Activated CD4-positive, alpha-beta memory T cell treated with anti-CD3 and anti-CD28 coated beads, Interleukin-2, amount 10 ng/mL, durations not matched to agents 7 days and 5 days (primary cell): ENCODE measurements at regions of chr22 and their contacts with region 1.

Region 1: GRCh38 chr22:41621099-41621910 is at the start of gene XRCC6:
- DNase-seq: peak; percentile 100
- H3K4me3 Mint-ChIP-seq: peak within 1 kb of the TSS; percentile 99
- H3K27ac Mint-ChIP-seq: peak within 1 kb of the TSS; percentile 97
- H3K4me1 Mint-ChIP-seq: peaks cover 46% of the 10 kb centered on the region
- H3K27me3 Mint-ChIP-seq: no peaks in the 10 kb centered on the region
- total RNA-seq, gene XRCC6: 244 to 251 TPM

Region 2: DNA sequence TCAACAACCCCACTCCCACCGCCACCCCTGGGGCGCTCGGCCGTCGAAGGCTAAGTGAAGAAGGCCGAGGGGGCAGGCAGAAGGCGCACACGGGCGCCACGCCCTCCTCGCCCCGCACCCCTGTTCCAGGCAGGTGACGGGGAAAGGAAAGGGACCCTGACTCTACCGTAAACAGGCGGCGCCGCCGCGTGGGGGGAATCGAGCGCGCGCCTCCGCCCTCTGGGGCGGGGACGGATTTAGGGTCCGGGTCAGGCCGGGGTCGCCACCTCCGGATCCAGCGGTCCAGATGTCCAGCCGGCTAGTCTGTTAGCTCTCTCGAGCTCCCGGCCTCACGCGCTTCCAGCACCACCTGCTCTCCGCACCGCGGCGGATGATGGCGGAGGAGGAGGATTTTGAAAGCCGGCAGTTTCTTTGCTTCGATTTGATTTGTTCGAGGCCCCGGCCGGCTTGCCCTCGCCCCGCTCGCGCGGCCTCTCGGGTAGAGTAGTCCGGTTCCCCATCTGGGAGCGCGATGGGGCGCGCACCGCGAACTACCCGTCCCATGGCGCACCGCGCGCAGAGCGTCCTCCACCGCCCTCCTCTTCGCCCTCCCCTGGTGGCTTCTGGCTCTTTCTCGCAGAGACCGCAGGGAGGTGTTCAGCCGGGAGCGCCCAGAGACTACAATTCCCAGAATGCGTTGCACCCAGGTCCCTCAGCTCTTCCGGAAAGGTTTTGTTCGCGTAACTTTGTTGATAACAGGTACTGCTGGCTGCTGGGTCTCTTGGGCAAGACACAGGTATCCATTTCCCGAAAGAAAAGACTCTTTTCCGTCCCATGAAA is 335.3 kb before region 1 on chr22 and contains the start of gene RANGAP1:
- CTCF ChIA-PET with region 1: no interaction called
- POLR2A ChIA-PET with region 1: interaction called, 15 read pairs
- DNase-seq: peak; percentile 99
- H3K4me3 Mint-ChIP-seq: peak within 1 kb of the TSS; percentile 94
- H3K27ac Mint-ChIP-seq: peak within 1 kb of the TSS; percentile 99
- H3K4me1 Mint-ChIP-seq: peaks cover 41% of the 10 kb centered on the region
- H3K27me3 Mint-ChIP-seq: no peaks in the 10 kb centered on the region
- total RNA-seq, gene RANGAP1: 98.7 to 99.7 TPM

Region 3: GRCh38 chr22:41341990-41342389 is 279.3 kb before region 1 on chr22:
- CTCF ChIA-PET with region 1: no interaction called
- POLR2A ChIA-PET with region 1: no interaction called
- DNase-seq: peak; percentile 22
- H3K4me3 Mint-ChIP-seq: no peak overlapping the region
- H3K27ac Mint-ChIP-seq: peak overlapping the region; percentile 31
- H3K4me1 Mint-ChIP-seq: peaks cover 7% of the 10 kb centered on the region
- H3K27me3 Mint-ChIP-seq: no peaks in the 10 kb centered on the region

Region 4: DNA sequence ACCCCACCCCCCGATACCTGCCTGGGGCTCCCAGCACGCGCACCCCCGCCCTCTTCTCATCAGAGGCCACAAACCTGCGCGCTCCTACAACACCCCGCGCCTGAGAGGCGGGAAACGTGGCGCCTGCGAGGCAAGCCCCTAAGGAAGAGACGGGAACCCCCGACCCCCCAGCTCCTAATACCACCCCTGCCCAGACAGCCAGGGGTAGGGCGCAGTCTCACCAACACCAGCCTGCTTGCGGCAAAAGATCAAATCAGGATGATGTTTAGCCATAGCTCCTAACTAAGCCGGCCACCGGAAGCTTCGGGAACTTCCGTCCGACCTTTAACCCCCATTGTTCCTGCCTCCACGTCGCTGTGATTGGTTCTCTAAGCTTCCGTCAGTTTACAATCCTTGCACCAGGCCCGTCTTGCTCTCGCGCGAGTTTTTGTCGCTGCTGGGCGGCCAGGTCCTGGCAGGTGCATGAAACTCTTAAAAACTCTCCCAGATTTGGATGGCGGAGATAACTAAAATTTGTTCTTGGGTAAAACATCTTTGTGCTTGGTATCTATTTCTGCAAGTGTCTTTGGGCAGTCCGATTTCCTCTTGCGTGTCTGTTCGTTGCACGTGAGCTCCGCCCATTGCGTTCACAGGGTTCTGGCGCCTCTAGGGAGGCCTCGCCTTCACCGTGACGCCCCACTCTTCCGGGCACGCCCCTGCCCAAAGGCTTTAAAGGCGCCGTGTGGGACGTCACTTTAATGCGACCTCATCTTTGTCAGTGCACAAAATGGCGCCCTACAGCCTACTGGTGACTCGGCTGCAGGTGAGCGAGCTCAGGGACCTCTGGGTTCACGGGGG is 152.7 kb before region 1 on chr22 and contains the starts of genes ACO2 and PHF5A:
- CTCF ChIA-PET with region 1: interaction called, 5 read pairs
- POLR2A ChIA-PET with region 1: interaction called, 13 read pairs
- DNase-seq: peak; percentile 98
- H3K4me3 Mint-ChIP-seq: peak within 1 kb of the TSS; percentile 77
- H3K27ac Mint-ChIP-seq: peak within 1 kb of the TSS; percentile 96
- H3K4me1 Mint-ChIP-seq: peaks cover 58% of the 10 kb centered on the region
- H3K27me3 Mint-ChIP-seq: no peaks in the 10 kb centered on the region
- total RNA-seq, gene ACO2: 69.9 to 72.2 TPM
- total RNA-seq, gene PHF5A: 43.9 to 55.3 TPM

Region 5: GRCh38 chr22:41589391-41590241 is 31.7 kb before region 1 on chr22 and contains the start of gene PMM1:
- CTCF ChIA-PET with region 1: interaction called, 12 read pairs
- POLR2A ChIA-PET with region 1: interaction called, 158 read pairs
- DNase-seq: peak; percentile 100
- H3K4me3 Mint-ChIP-seq: peak within 1 kb of the TSS; percentile 96
- H3K27ac Mint-ChIP-seq: peak within 1 kb of the TSS; percentile 87
- H3K4me1 Mint-ChIP-seq: peaks cover 26% of the 10 kb centered on the region
- H3K27me3 Mint-ChIP-seq: no peaks in the 10 kb centered on the region
- total RNA-seq, gene PMM1: 44.4 to 46.2 TPM

Region 6: DNA sequence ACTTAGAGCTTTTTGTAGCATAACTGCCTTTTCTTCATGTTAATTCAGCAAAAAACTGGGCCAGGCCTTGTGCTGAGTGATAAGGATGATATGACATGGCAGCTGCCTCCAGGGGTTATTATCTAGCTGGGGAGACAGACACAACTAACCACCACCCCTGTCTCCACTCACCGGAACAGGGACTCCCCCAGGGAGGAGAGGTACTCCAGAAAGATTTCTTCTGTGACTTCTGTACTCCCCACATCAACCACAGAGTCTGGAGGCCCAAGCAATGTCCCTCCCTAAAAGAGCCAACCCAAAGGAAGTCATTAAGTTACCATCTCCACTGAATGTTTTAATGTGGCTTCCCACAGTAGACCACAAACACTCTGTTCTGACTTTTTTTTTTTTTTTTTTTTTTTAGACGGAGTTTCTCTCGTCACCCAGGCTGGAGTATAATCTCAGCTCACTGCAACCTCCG is 17.4 kb before region 1 on chr22:
- CTCF ChIA-PET with region 1: interaction called, 7 read pairs
- POLR2A ChIA-PET with region 1: interaction called, 82 read pairs
- DNase-seq: peak; percentile 77
- H3K4me3 Mint-ChIP-seq: peak overlapping the region; percentile 50
- H3K27ac Mint-ChIP-seq: peak overlapping the region; percentile 72
- H3K4me1 Mint-ChIP-seq: peaks cover 38% of the 10 kb centered on the region
- H3K27me3 Mint-ChIP-seq: peaks cover 4% of the 10 kb centered on the region

Region 7: DNA sequence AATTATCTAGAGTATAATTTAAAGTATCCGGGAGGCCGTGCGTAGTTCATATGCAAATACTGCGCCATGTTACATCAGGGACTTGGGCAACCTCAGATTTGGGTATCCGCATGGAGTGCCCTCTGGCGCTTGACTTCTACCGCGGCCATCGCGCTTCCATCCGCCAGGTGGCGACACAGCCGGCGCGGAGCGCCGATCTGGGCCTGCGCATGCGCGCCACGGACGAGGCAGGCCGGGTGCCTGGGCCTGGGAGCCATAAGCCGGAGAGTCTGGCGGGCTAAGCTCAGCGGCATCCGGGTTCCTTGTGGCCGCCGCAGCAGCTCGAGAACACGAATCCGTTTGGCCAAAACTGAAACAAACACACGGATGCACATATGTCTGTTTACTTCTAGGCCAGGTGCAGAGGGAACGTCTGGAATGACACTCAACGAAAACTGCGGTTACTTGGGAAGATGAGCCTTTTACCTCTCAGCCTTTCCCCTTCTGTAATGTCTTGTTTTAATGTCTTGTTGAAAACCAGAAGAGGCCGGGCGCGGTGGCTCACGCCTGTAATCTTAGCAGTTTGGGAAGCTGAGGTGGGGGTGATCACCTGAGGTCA is 45.5 kb after region 1 on chr22:
- CTCF ChIA-PET with region 1: interaction called, 20 read pairs
- POLR2A ChIA-PET with region 1: interaction called, 30 read pairs
- DNase-seq: peak; percentile 96
- H3K4me3 Mint-ChIP-seq: peak overlapping the region; percentile 86
- H3K27ac Mint-ChIP-seq: peak overlapping the region; percentile 98
- H3K4me1 Mint-ChIP-seq: peaks cover 21% of the 10 kb centered on the region
- H3K27me3 Mint-ChIP-seq: no peaks in the 10 kb centered on the region

Region 8: GRCh38 chr22:41697126-41697775 is 75.9 kb after region 1 on chr22:
- CTCF ChIA-PET with region 1: no interaction called
- POLR2A ChIA-PET with region 1: interaction called, 13 read pairs
- DNase-seq: peak; percentile 91
- H3K4me3 Mint-ChIP-seq: no peak overlapping the region
- H3K27ac Mint-ChIP-seq: peak overlapping the region; percentile 68
- H3K4me1 Mint-ChIP-seq: peaks cover 18% of the 10 kb centered on the region
- H3K27me3 Mint-ChIP-seq: peaks cover 4% of the 10 kb centered on the region